ENCODE measurements at regions of chr7 and their contacts with region 1.

Region 1: GRCh38 chr7:34501156-34501555 is 156.9 kb upstream of the NPSR1 start:
- DNase-seq: peak in 20 of 42 donors; percentile 2 to 69 (median 21)

Region 2: DNA sequence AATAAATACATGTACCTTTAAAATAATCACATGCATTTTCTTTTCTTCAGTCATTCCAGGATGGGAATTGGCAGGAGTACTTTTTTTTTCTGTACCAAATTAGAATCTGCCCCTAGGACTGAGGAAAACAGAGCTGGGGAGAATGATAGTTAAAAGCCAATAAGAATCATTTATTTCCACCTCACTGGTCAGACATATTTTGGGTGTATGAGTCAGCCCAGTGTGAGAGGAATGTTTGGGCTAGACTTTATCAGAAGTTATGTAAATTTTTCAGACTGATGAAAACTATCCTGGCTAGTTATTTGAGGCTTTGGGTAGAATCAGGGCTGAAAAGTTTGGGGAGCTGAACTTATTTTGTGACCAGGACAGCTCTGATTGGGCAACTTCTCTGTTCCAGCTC is 146.3 kb before region 1 on chr7:
- intact Hi-C with region 1: loop called (anchors 10 kb)
- DNase-seq: no peak

Measured in head of caudate nucleus (tissue), 42 donors.